WTC11 (cell line): ENCODE measurements at regions of chr7 and their contacts with region 1.

Region 1: GRCh38 chr7:45917658-45918057 is 3.4 kb downstream of the IGFBP3 start:
- DNase-seq: peak; percentile 88
- ATAC-seq: peak; percentile 7
- H3K4me3 Mint-ChIP-seq: no peak overlapping the region
- H3K27ac Mint-ChIP-seq: no peak overlapping the region
- H3K4me1 Mint-ChIP-seq: peaks cover 26% of the 10 kb centered on the region
- H3K27me3 Mint-ChIP-seq: peaks cover 47% of the 10 kb centered on the region
- CTCF ChIP-seq: peak; percentile 93

Region 2: GRCh38 chr7:45872116-45873034 is 45.3 kb before region 1 on chr7:
- CTCF ChIA-PET with region 1: interaction called, 10 read pairs
- POLR2A ChIA-PET with region 1: interaction called, 3 read pairs
- DNase-seq: peak; percentile 61
- ATAC-seq: peak; percentile 96
- H3K4me3 Mint-ChIP-seq: no peak overlapping the region
- H3K27ac Mint-ChIP-seq: no peak overlapping the region
- H3K4me1 Mint-ChIP-seq: 0 out of 2 replicates have a peak, but pooled peaks cover 5% of the 10 kb centered on the region
- H3K27me3 Mint-ChIP-seq: no peaks in the 10 kb centered on the region; the same call in none of the 2 replicates
- CTCF ChIP-seq: peak; percentile 57

Region 3: DNA sequence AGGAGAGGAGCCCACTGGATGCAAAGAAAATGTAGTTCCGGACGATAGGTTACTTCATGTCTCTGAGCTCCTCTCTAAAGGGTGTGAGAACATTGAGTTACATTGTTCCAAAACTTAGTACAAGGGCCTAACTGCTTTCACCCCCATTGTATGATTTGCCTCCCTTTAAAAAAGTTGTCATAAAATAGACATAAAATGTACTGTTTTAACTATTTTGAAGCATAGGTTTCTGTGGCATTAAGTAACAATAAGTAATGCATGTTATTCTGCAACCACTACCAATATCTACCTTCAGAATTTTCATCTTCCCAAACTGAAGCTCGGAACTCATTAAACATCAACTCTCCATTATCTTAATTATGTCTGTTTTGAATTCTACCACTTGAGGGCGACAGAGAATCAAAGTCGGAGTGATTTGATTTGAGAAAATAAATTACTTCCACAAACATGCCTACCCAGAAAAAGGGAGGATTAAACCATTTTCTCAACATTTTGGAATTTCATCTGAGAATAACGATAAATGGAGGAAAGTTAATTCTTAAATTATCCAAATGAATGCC is 26.7 kb before region 1 on chr7:
- CTCF ChIA-PET with region 1: interaction called, 12 read pairs
- POLR2A ChIA-PET with region 1: no interaction called
- DNase-seq: no peak
- ATAC-seq: no peak
- H3K4me3 Mint-ChIP-seq: no peak overlapping the region
- H3K27ac Mint-ChIP-seq: no peak overlapping the region
- H3K4me1 Mint-ChIP-seq: peaks cover 16% of the 10 kb centered on the region
- H3K27me3 Mint-ChIP-seq: peaks cover 51% of the 10 kb centered on the region
- CTCF ChIP-seq: peak; percentile 29; the same call in 1 of the 2 replicates

Region 4: DNA sequence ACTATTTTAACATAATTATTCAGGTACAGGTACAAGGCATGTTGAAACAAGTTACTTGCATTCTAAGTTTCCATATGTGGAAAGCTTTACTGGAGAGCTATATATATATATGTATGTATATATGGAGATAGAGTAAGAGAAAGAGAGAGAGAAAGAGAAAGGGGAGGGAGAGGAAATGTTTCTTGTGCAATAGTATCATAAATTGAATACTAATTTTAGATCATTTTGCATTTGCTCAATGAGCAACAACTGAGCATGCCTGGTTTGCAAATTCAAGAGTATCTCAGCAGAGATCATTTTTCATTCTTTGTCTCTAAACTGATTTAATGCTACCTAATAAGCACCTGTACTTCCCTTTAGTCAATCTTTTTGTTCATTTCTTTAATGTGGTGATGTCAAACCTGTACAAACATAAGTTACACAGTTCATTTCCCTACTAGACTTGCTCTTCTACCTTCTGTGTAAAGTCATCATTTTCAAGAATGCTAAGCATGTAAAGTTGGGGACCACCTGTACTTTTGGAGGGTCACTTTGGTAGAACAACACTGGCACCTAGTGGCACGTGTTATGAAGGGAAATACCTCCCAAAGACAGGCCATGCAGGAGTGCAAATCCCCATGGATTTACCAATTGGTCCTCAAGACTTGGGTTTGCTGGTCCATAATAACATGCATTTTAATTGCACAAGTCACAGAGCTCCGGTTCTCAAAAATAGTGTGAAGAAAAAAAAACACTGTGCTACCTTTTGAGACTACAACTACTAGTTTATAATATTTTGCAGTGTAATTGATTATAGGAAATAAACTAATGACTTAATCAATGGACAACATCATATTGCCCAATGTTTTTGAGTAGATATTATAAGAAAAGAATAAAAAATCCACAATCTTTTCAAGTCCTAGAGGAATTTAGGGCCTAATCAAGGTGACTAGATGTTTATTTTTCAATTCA is 434.6 kb after region 1 on chr7:
- CTCF ChIA-PET with region 1: interaction called, 59 read pairs
- POLR2A ChIA-PET with region 1: interaction called, 3 read pairs
- DNase-seq: peak; percentile 66
- ATAC-seq: peak; percentile 83
- H3K4me3 Mint-ChIP-seq: no peak overlapping the region
- H3K27ac Mint-ChIP-seq: no peak overlapping the region
- H3K4me1 Mint-ChIP-seq: peaks cover 4% of the 10 kb centered on the region
- H3K27me3 Mint-ChIP-seq: no peaks in the 10 kb centered on the region
- CTCF ChIP-seq: peak; percentile 36

Region 5: DNA sequence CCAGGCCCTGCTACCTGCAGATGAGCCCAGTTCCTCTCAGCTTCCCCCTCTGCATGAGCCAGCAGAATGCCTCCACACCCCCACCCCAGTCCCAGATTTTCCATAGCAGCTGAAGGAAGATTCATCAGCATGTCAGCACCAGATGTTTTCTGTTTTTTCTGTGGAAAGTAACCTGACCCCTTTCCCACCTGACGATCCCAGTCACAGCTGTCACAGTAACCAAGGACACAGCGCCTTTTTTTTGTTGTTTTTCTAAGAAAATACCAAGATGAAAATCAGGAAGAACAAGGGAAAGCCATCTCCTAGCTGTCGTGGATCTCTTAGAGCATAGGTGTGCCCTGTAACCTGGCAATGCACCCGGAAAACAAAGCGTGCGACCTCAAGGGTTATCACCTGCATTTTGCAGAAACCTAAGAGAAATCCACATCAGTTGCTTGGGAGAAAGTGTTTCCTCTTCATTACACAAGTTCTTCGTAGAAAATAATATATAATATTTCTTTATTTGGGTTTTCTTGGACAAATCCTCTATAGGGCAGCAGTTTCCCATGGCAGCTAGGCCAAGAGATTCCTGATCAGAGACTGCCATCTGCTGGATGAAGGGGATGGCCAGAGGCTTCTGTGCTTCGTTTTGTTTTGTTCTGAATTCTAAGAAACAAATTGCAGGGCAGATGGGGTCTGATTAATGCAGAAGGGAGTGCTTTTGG is 1262.3 kb after region 1 on chr7:
- CTCF ChIA-PET with region 1: interaction called, 10 read pairs
- POLR2A ChIA-PET with region 1: no interaction called
- DNase-seq: peak; percentile 59
- ATAC-seq: peak; percentile 88
- H3K4me3 Mint-ChIP-seq: no peak overlapping the region
- H3K27ac Mint-ChIP-seq: no peak overlapping the region
- H3K4me1 Mint-ChIP-seq: peaks cover 6% of the 10 kb centered on the region
- H3K27me3 Mint-ChIP-seq: peaks cover 8% of the 10 kb centered on the region
- CTCF ChIP-seq: peak; percentile 61